Esophagus muscularis mucosa (tissue), 4 donors: ENCODE measurements at regions of chr12 and their contacts with region 1.

Region 1: DNA sequence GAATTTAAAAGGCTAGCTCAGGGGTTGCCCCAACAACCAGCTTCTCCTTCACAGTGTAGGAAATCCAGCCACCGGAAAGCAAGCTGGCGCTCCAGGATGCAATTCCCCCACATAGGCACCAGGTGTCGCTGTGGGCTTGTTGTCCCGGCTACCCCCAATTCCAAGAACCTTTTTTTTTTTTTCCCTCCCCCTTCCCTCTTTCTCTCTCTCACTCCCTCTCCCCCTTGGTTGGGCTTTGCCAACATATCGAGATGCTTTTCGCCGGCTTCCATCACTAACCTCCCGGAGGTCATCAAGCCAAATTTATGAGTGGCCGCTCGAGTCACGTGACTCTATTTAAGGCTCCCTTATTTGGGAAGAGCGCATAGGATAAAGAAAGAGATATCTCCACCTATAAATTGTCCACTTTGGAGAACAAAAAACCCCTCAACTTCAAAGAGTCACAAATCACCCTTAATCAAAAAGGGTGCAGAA is at the start of gene HOXC5:
- DNase-seq: no peak
- H3K4me3 ChIP-seq: peak within 1 kb of the TSS; percentile 50 to 69 (median 63)
- H3K27ac ChIP-seq: peak within 1 kb of the TSS; percentile 70 to 83 (median 74)
- H3K4me1 ChIP-seq: peaks cover 14 to 45% (median 37%) of the 10 kb centered on the region in 4 donors
- H3K27me3 ChIP-seq: peaks cover 0 to 82% (median 28%) of the 10 kb centered on the region in 4 donors
- CTCF ChIP-seq: peak; percentile 95 to 99 (median 98)
- EP300 ChIP-seq: no peak
- POLR2A ChIP-seq: no peak
- total RNA-seq, gene HOXC5: 0.83 to 2.0 TPM in 2 of 4 donors, not detected in the others

Region 2: GRCh38 chr12:54126696-54127537 is 94.3 kb after region 1 on chr12:
- intact Hi-C with region 1: loop called (anchors 5 kb)
- DNase-seq: no peak
- H3K4me3 ChIP-seq: peak overlapping the region; percentile 64 to 93 (median 70)
- H3K27ac ChIP-seq: peak overlapping the region; percentile 81 to 87 (median 84)
- H3K4me1 ChIP-seq: peaks cover 10 to 49% (median 42%) of the 10 kb centered on the region in 4 donors
- H3K27me3 ChIP-seq: no peaks in the 10 kb centered on the region
- CTCF ChIP-seq: no peak
- EP300 ChIP-seq: no peak
- POLR2A ChIP-seq: no peak

Region 3: DNA sequence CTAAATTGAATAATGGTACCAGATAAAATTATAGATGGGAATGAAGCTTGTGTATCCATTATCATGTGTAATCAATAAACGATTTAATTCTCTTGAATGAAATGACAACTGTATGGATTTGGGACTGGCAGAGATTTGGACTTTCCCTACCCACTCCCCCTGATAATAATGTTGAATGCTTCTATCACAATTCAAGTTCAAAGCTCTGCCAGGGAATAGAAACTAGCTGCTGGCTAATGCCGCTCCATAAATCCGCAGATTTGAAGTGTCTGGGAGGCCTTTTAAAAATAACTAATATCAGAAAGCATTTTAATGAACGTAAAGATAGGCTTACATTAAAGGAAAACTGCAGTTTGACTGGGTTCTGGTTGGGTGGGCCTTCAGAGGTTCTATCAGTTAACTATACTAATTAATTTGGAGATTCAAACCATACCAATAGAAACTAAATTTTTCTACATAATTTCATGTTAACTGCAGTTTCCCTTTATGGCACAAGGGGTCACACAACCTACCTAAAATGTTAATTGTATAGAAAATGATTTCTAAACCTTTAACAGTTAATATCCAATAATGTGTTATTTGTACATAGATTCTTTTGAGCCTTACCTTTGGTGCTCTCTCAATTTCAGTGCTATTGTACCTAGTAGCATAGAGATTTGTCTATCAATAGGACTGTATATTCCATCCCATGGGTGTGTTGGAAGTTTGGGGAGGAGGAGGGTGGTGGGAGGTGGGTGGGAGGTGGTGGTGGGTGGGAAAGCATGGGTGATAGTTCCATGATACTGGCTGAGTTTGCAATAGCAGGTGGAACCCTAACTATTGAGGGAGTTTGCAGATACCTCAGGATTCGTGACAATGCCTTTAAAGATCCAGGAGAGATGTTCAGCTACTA is 252.7 kb after region 1 on chr12:
- intact Hi-C with region 1: no loop called
- DNase-seq: no peak
- H3K4me3 ChIP-seq: no peak overlapping the region
- H3K27ac ChIP-seq: peak overlapping the region in 1 of 4 donors; percentile 30
- H3K4me1 ChIP-seq: peaks cover 50 to 58% (median 57%) of the 10 kb centered on the region in 4 donors
- H3K27me3 ChIP-seq: no peaks in the 10 kb centered on the region
- CTCF ChIP-seq: peak in 2 of 3 experiments; percentile 6 to 21
- EP300 ChIP-seq: no peak
- POLR2A ChIP-seq: no peak